Right ventricle myocardium inferior (tissue), 1 donor: ENCODE measurements at regions of chr16 and their contacts with region 1.

Region 1: DNA sequence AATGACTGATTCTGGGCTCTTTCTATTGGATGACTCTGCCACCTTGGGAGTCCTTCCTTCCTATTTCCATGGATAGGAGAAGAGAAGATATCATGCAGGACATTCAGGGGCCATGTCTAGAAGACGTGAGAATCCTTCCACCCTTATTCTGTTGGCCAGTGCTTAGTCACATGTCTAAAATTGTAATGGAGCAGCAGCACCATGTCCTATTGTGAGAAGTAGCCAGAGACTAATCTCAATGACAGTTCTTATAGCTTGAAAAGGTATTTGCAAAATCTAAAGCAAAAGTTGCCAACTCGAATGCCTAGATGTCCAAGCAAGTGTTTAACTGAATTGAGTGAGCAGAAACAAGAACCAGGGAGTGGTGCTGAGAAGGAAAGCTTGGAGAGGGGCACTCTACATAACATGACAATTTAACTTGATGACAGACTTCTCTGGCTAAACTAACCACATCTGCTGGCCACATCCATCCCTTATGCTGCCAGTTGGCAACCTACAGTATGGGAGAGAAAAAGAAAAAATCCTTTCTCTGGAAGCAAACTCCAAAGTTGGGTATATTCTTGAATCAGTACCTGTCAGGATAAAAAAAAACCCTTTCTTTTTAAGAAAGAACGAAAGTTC is 225.7 kb downstream of the CDH13 start:
- DNase-seq: no peak
- ATAC-seq: peak; percentile 89

Region 2: DNA sequence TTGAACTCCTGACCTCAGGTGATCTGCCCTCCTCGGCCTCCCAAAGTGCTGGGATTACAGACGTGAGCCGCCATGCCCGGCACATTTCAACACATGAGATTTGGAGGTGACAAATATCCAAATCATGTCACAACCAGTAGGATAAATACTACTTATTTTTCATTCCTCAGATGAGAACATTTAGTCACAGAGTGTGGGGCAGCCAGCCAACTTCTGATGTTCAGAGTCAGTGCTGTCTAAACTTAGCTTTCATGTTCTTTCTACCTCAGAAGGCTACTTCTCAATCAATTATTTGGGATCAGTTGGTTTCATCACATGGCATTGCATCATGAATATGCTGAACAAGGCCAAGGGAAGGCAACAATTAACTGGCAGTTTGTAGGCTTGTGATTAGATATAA is 91.3 kb before region 1 on chr16:
- intact Hi-C with region 1: loop called (anchors 5 kb)
- DNase-seq: peak; percentile 83
- ATAC-seq: peak; percentile 85